B cell (primary cell): ENCODE measurements at regions of chr5 and their contacts with region 1.

Region 1: GRCh38 chr5:32329308-32329834 is 16.6 kb upstream of the MTMR12 start:
- DNase-seq: peak; percentile 71
- ATAC-seq: peak; percentile 84
- H3K4me3 ChIP-seq: no peak overlapping the region
- H3K4me3 Mint-ChIP-seq: no peak overlapping the region
- H3K27ac ChIP-seq: no peak overlapping the region
- H3K27ac Mint-ChIP-seq: no peak overlapping the region
- H3K4me1 ChIP-seq: no peaks in the 10 kb centered on the region
- H3K4me1 Mint-ChIP-seq: peaks cover 2% of the 10 kb centered on the region
- H3K27me3 ChIP-seq: no peaks in the 10 kb centered on the region
- H3K27me3 Mint-ChIP-seq: no peaks in the 10 kb centered on the region
- CTCF ChIP-seq: peak; percentile 74

Region 2: GRCh38 chr5:31825518-31826068 is 503.8 kb before region 1 on chr5:
- CTCF ChIA-PET with region 1: no interaction called
- POLR2A ChIA-PET with region 1: no interaction called
- intact Hi-C with region 1: no loop called
- DNase-seq: peak; percentile 8
- ATAC-seq: no peak
- H3K4me3 ChIP-seq: no peak overlapping the region
- H3K4me3 Mint-ChIP-seq: no peak overlapping the region
- H3K27ac ChIP-seq: no peak overlapping the region
- H3K27ac Mint-ChIP-seq: no peak overlapping the region
- H3K4me1 ChIP-seq: no peaks in the 10 kb centered on the region
- H3K4me1 Mint-ChIP-seq: no peaks in the 10 kb centered on the region
- H3K27me3 ChIP-seq: peaks cover 0 to 8% (median 0%) of the 10 kb centered on the region in 4 experiments
- H3K27me3 Mint-ChIP-seq: peaks cover 24% of the 10 kb centered on the region
- CTCF ChIP-seq: no peak

Region 3: GRCh38 chr5:32223946-32224608 is 105.3 kb before region 1 on chr5:
- CTCF ChIA-PET with region 1: interaction called, 289 read pairs
- POLR2A ChIA-PET with region 1: no interaction called
- intact Hi-C with region 1: no loop called
- DNase-seq: no peak
- ATAC-seq: no peak
- H3K4me3 ChIP-seq: no peak overlapping the region
- H3K4me3 Mint-ChIP-seq: no peak overlapping the region
- H3K27ac ChIP-seq: no peak overlapping the region
- H3K27ac Mint-ChIP-seq: no peak overlapping the region
- H3K4me1 ChIP-seq: no peaks in the 10 kb centered on the region
- H3K4me1 Mint-ChIP-seq: no peaks in the 10 kb centered on the region
- H3K27me3 ChIP-seq: no peaks in the 10 kb centered on the region
- H3K27me3 Mint-ChIP-seq: no peaks in the 10 kb centered on the region
- CTCF ChIP-seq: no peak

Region 4: DNA sequence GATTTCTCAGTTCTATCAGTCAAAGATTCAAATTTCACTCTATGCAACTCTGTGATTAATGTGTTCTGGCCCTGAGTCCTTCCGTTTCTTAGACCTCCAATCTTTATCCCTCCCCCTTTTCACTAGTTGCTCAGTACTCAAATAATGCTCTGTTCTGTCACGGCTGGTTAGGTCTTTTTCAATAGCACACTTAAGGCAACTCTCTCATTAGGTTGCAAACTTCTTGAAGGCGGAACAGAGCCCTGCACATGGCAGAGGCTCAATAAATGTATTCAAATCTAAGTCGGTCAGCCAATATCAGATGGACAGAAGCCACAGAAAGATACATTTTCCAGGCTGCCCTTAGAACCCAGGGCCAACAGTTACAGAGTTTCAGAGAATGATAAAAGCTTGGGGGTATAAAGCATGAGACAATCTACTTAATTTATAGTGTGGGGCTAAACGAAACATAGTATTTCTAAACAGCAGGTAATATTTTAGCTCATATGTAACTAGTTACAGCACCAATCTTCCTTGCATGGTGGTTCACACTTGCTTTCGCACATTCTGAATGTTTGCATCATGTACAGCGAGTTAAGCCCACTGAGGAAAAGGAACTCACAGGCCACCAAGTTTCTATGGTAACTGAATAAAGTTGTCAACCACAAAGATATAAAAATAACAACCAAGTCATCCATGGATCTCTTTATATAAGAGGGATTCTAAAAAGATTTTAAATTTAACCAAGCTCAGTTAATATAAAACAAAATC is 88.2 kb before region 1 on chr5:
- CTCF ChIA-PET with region 1: interaction called, 289 read pairs
- POLR2A ChIA-PET with region 1: no interaction called
- intact Hi-C with region 1: no loop called
- DNase-seq: no peak
- ATAC-seq: peak; percentile 31
- H3K4me3 ChIP-seq: no peak overlapping the region
- H3K4me3 Mint-ChIP-seq: no peak overlapping the region
- H3K27ac ChIP-seq: peak overlapping the region; percentile 20 to 71
- H3K27ac Mint-ChIP-seq: no peak overlapping the region
- H3K4me1 ChIP-seq: peaks cover 0 to 2% of the 10 kb centered on the region in 2 donors
- H3K4me1 Mint-ChIP-seq: no peaks in the 10 kb centered on the region
- H3K27me3 ChIP-seq: no peaks in the 10 kb centered on the region
- H3K27me3 Mint-ChIP-seq: no peaks in the 10 kb centered on the region
- CTCF ChIP-seq: no peak

Region 5: GRCh38 chr5:32342656-32343055 is 13.3 kb after region 1 on chr5:
- CTCF ChIA-PET with region 1: interaction called, 7 read pairs
- POLR2A ChIA-PET with region 1: interaction called, 11 read pairs
- intact Hi-C with region 1: no loop called
- DNase-seq: no peak
- ATAC-seq: no peak
- H3K4me3 ChIP-seq: no peak overlapping the region
- H3K4me3 Mint-ChIP-seq: no peak overlapping the region
- H3K27ac ChIP-seq: no peak overlapping the region
- H3K27ac Mint-ChIP-seq: no peak overlapping the region
- H3K4me1 ChIP-seq: no peaks in the 10 kb centered on the region
- H3K4me1 Mint-ChIP-seq: no peaks in the 10 kb centered on the region
- H3K27me3 ChIP-seq: no peaks in the 10 kb centered on the region
- H3K27me3 Mint-ChIP-seq: no peaks in the 10 kb centered on the region
- CTCF ChIP-seq: no peak

Region 6: GRCh38 chr5:32996336-32996735 is 667.0 kb after region 1 on chr5:
- CTCF ChIA-PET with region 1: no interaction called
- POLR2A ChIA-PET with region 1: no interaction called
- intact Hi-C with region 1: no loop called
- DNase-seq: no peak
- ATAC-seq: no peak
- H3K4me3 ChIP-seq: no peak overlapping the region
- H3K4me3 Mint-ChIP-seq: no peak overlapping the region
- H3K27ac ChIP-seq: no peak overlapping the region
- H3K27ac Mint-ChIP-seq: no peak overlapping the region
- H3K4me1 ChIP-seq: no peaks in the 10 kb centered on the region
- H3K4me1 Mint-ChIP-seq: no peaks in the 10 kb centered on the region
- H3K27me3 ChIP-seq: no peaks in the 10 kb centered on the region
- H3K27me3 Mint-ChIP-seq: no peaks in the 10 kb centered on the region
- CTCF ChIP-seq: no peak